Pancreas (tissue), 10 donors: ENCODE measurements at regions of chr15 and their contacts with region 1.

Region 1: DNA sequence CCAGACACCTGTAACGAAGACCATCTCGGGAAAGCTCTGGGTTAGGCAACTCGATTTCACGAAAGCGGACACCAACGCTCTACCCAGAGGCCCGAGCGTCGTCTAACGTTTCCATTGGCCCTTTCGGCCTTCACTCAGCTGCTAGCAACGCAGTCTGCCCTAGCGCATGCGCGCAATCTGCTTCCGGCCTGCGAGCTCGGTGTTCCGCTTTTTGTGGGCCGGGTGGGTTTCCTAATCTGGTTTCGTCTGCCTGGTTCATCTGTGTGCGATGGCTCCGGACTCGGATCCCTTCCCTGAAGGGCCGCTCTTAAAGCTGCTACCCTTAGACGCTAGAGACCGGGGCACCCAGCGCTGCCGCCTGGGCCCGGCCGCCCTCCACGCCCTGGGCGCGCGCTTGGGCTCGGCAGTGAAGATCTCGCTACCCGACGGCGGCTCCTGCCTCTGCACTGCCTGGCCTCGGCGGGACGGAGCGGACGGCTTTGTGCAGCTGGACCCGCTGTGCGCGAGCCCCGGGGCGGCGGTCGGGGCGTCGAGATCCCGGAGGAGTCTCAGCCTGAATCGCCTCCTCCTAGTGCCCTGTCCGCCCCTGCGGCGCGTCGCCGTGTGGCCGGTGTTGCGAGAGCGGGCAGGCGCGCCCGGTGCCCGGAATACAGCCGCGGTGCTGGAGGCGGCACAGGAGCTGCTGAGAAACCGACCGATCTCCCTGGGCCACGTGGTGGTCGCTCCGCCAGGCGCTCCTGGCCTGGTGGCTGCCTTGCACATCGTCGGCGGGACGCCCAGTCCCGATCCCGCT is 24.0 kb upstream of the GATM start:
- DNase-seq: peak; percentile 95 to 99 (median 98)
- ATAC-seq: peak; percentile 88 to 93 (median 91)
- H3K4me3 ChIP-seq: peak overlapping the region; percentile 83 to 97 (median 92)
- H3K27ac ChIP-seq: peak overlapping the region; percentile 73 to 95 (median 90)
- H3K4me1 ChIP-seq: peaks cover 13 to 47% (median 29%) of the 10 kb centered on the region in 3 donors
- H3K27me3 ChIP-seq: no peaks in the 10 kb centered on the region
- CTCF ChIP-seq: no peak

Region 2: GRCh38 chr15:45198337-45199135 is 203.8 kb before region 1 on chr15:
- intact Hi-C with region 1: no loop called
- DNase-seq: peak; percentile 88 to 98 (median 92)
- ATAC-seq: peak; percentile 61 to 77 (median 72)
- H3K4me3 ChIP-seq: peak overlapping the region; percentile 30 to 65 (median 52)
- H3K27ac ChIP-seq: peak overlapping the region; percentile 93 to 99 (median 97)
- H3K4me1 ChIP-seq: peaks cover 0 to 5% (median 0%) of the 10 kb centered on the region in 3 donors
- H3K27me3 ChIP-seq: no peaks in the 10 kb centered on the region
- CTCF ChIP-seq: peak in 3 of 4 donors; percentile 28 to 39 (median 31)

Region 3: GRCh38 chr15:45307230-45307924 is 95.0 kb before region 1 on chr15:
- intact Hi-C with region 1: loop called in 2 of 3 experiments (anchors 5 to 10 kb)
- DNase-seq: no peak
- ATAC-seq: peak; percentile 60 to 79 (median 64)
- H3K4me3 ChIP-seq: peak overlapping the region in 1 of 4 donors; percentile 4
- H3K27ac ChIP-seq: peak overlapping the region in 2 of 4 donors; percentile 38 to 47
- H3K4me1 ChIP-seq: peaks cover 8 to 25% (median 18%) of the 10 kb centered on the region in 3 donors
- H3K27me3 ChIP-seq: no peaks in the 10 kb centered on the region
- CTCF ChIP-seq: peak; percentile 11 to 43 (median 38)

Region 4: GRCh38 chr15:45314960-45315359 is 87.4 kb before region 1 on chr15:
- intact Hi-C with region 1: loop called in 1 of 3 experiments (anchors 10 kb)
- DNase-seq: peak in 4 of 6 donors; percentile 43 to 65 (median 56)
- ATAC-seq: peak; percentile 51 to 78 (median 64)
- H3K4me3 ChIP-seq: no peak overlapping the region
- H3K27ac ChIP-seq: no peak overlapping the region
- H3K4me1 ChIP-seq: peaks cover 7 to 26% (median 8%) of the 10 kb centered on the region in 3 donors
- H3K27me3 ChIP-seq: no peaks in the 10 kb centered on the region
- CTCF ChIP-seq: peak in 1 of 4 donors; percentile 25